WTC11 (cell line): ENCODE measurements at regions of chr4 and their contacts with region 1.

Region 1: DNA sequence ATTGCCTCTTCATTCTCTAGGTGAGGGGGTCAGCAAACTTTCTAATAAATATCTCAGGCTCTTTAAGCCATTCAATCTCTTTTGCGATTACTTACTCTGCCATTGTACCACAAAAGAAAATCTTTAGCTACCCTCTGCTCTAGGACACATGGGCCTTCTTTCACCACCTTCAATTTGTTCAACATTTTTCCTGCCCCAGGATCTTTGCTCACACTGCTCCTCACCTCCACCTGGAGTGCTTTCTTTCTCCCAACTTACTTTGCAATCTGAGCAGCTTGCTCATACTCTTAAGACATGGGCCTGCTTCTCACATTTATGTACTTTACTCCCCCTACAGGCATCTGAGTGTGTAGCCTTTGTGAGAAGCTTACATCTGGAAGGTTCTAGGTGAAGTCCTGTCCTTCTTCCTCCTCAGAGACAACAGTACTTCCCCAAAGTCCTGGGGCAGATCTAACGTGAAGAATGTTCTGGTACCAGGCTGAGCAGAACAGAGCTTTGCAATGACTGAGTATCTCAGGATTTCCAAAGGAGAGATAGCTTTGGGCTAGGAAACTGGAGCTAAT is 55.0 kb upstream of the PRDM5 start:
- DNase-seq: peak; percentile 14
- ATAC-seq: peak; percentile 98
- H3K4me3 Mint-ChIP-seq: no peak overlapping the region
- H3K27ac Mint-ChIP-seq: no peak overlapping the region
- H3K4me1 Mint-ChIP-seq: no peaks in the 10 kb centered on the region; the same call in 1 of the 2 replicates
- H3K27me3 Mint-ChIP-seq: no peaks in the 10 kb centered on the region
- CTCF ChIP-seq: peak; percentile 20; the same call in 1 of the 2 replicates

Region 2: DNA sequence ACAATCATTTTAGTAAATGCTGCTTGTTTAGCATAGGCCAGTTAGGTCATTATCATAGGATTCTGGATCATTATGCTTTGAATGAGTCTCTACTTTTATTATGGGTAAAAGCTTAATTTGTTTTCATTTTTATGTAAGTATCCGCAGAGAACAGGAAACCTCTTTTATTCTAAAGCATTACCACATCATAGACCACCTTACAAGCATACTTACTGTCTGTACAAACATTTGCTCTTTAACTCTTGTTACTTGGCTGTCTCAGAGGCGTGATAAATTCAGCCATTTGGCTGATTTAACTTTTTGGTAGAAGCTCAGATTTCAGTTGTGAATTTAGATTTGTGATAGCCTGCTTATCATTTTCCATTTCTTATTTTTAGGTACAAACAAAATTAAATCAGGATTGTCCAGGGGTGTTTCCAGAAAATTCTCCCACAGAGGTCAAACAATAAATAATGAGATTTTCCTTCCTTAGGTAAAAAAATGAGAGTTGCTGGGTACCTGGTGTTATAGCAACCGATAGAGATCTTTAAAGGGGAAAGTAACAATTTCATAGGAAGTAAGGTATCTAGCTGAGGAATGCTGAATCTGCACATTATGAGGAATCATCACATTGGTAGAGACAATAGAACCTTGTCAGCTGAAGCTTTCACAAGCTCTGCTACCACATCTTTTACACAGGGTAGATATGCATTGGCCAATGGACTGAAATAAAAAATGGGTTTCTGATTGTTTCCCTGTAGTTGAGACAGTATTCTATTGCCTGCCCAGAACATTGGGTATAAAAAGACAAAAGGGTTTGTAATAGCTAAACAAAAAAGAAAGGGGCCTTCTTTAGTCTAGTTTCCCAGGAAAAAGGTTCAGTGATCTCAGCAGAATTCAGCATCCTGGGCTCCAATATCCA is 32.3 kb after region 1 on chr4:
- CTCF ChIA-PET with region 1: interaction called, 10 read pairs
- POLR2A ChIA-PET with region 1: no interaction called
- DNase-seq: no peak
- ATAC-seq: no peak
- H3K4me3 Mint-ChIP-seq: peak overlapping the region; percentile 11; the same call in 1 of the 2 replicates
- H3K27ac Mint-ChIP-seq: peak overlapping the region; percentile 7; the same call in 1 of the 2 replicates
- H3K4me1 Mint-ChIP-seq: peaks cover 47% of the 10 kb centered on the region
- H3K27me3 Mint-ChIP-seq: no peaks in the 10 kb centered on the region
- CTCF ChIP-seq: no peak